PC-3 (cell line): ENCODE measurements at regions of chr6 and their contacts with region 1.

Region 1: DNA sequence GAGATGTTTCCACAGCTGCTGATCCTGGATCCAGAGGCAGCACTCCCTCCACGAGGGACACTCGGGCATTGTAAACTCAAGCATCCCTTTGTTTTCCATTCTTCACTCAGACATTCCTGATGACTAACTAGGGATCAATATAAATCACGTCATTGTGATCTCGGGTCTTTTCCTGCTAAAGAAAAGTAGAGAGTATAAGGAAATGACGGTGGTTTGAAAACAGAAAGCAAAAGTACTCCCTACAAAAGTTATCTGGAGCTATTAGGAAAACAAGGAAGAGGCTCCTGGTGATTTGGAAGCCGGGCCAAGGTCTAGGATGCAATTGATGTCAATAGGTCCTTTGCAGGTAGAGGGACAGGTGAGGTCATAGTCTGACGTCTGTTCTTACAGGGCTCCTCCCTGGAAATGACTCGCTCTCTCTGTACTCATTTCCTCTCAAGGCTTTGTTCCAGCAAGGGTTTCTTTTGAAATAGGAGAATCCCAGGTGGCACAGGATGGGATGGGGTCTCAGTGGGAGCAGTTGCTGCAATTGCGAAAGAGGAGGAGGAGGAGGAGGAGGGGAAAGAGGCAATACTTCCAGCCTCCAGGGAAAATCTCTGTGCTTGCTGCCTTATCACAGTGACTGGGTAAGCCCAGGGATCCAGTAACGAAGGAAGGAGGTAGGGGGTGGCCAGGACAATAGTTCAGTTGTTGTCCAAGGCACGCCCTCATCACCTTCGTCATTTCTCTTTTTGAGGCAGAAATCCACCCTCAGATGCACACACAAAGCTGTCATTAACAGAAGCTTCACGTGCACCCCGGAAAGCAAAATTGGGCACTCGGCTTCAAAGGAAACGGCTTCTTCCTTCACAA is 222.9 kb downstream of the LY86 start:
- DNase-seq: peak; percentile 98
- ATAC-seq: peak; percentile 82
- H3K4me3 ChIP-seq: peak overlapping the region; percentile 45; the same call in 1 of the 2 replicates
- H3K27ac ChIP-seq: peak overlapping the region; percentile 100
- H3K4me1 ChIP-seq: peaks cover 38% of the 10 kb centered on the region
- H3K27me3 ChIP-seq: no peaks in the 10 kb centered on the region
- CTCF ChIP-seq: no peak

Region 2: DNA sequence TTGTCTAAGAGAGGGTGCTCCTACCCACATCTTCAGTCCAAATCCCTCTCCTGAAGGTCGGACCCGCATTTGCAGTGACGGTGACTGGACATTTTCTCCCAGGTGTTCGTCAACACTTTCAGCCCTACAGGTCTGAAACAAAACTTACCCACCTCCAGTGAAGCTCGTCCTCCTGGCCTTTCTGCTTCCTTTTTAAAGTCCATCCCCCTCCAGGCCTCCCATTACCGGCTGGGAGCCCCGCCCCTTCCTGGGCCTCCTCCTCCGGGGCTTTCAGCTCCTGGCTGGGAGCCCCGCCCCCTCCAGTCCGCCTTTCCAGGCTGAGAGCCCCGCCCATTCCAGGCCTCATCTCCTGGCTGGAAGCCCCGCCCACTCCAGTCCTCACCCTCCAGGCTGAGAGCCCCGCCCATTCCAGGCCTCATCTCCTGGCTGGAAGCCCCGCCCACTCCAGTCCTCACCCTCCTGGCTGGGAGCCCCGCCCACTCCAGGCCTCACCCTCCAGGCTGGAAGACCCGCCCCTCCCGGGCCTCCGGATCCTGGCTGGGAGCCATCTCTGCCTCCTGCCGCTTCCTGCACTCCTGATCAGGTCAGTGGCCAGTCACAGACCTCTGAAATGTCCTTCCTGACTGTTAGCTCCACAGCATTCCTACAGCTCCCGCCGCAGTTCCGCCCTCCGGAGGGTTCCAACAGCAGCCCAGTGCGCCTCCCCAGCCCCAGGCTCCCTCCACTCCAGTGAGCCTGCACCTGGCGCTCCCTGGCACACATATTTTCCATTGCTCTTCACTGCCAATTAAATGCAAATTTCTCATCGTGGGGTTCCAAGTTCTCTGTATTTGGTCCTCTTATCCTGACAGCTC is 124.4 kb before region 1 on chr6:
- CTCF ChIA-PET with region 1: no interaction called
- POLR2A ChIA-PET with region 1: no interaction called
- intact Hi-C with region 1: loop called (anchors 5 kb)
- DNase-seq: peak; percentile 99
- ATAC-seq: peak; percentile 79
- H3K4me3 ChIP-seq: peak overlapping the region; percentile 52
- H3K27ac ChIP-seq: peak overlapping the region; percentile 77
- H3K4me1 ChIP-seq: peaks cover 42% of the 10 kb centered on the region
- H3K27me3 ChIP-seq: no peaks in the 10 kb centered on the region
- CTCF ChIP-seq: no peak

Region 3: GRCh38 chr6:6788394-6789020 is 22.9 kb before region 1 on chr6:
- CTCF ChIA-PET with region 1: no interaction called
- POLR2A ChIA-PET with region 1: no interaction called
- intact Hi-C with region 1: no loop called
- DNase-seq: peak; percentile 40
- ATAC-seq: no peak
- H3K4me3 ChIP-seq: no peak overlapping the region
- H3K27ac ChIP-seq: peak overlapping the region; percentile 94
- H3K4me1 ChIP-seq: peaks cover 28% of the 10 kb centered on the region
- H3K27me3 ChIP-seq: no peaks in the 10 kb centered on the region
- CTCF ChIP-seq: peak; percentile 66

Region 4: GRCh38 chr6:6851059-6851948 is 39.9 kb after region 1 on chr6:
- CTCF ChIA-PET with region 1: no interaction called
- POLR2A ChIA-PET with region 1: interaction called, 3 read pairs
- intact Hi-C with region 1: loop called (anchors 1 kb)
- DNase-seq: peak; percentile 99
- ATAC-seq: peak; percentile 99
- H3K4me3 ChIP-seq: no peak overlapping the region
- H3K27ac ChIP-seq: peak overlapping the region; percentile 88
- H3K4me1 ChIP-seq: peaks cover 32% of the 10 kb centered on the region
- H3K27me3 ChIP-seq: no peaks in the 10 kb centered on the region
- CTCF ChIP-seq: no peak

Region 5: DNA sequence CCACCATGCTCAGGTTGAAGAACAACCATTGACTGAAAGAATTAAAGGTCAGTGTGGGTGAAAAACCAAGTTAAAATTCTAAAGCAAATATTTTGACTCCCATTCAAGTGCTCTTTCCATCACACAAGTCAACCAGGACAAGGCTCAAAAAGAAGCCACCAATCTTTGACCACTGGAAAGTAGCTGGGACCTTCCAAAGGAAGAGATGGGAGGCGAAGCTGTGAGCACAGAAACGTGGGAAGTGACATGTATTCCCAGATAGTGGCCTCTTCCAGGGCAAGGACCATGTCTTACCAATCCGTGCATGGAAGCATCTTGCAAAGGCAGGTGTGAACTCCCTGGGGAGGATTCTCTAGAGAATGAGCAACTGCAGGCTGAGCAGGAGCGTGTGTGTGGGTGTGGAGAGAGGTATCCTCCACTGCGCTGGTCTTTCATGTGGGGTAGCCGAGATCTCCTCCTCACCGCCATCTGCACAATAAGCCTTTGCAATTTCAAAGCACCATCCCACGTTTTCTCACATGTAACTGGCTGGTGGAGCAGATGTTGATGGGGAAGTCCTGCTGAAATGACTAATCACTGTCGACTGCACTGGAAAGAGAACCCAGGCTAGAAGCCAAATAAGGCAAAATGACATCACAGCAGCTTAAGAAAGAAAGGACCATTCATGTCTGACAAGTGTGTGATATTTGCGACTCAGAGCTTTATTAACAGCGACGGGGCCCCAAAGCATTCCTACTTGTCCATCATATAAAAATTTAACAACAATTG is 107.0 kb after region 1 on chr6:
- CTCF ChIA-PET with region 1: no interaction called
- POLR2A ChIA-PET with region 1: no interaction called
- intact Hi-C with region 1: loop called (anchors 5 kb)
- DNase-seq: peak; percentile 75
- ATAC-seq: peak; percentile 45
- H3K4me3 ChIP-seq: no peak overlapping the region
- H3K27ac ChIP-seq: peak overlapping the region; percentile 73
- H3K4me1 ChIP-seq: peaks cover 42% of the 10 kb centered on the region
- H3K27me3 ChIP-seq: no peaks in the 10 kb centered on the region
- CTCF ChIP-seq: no peak

Region 6: DNA sequence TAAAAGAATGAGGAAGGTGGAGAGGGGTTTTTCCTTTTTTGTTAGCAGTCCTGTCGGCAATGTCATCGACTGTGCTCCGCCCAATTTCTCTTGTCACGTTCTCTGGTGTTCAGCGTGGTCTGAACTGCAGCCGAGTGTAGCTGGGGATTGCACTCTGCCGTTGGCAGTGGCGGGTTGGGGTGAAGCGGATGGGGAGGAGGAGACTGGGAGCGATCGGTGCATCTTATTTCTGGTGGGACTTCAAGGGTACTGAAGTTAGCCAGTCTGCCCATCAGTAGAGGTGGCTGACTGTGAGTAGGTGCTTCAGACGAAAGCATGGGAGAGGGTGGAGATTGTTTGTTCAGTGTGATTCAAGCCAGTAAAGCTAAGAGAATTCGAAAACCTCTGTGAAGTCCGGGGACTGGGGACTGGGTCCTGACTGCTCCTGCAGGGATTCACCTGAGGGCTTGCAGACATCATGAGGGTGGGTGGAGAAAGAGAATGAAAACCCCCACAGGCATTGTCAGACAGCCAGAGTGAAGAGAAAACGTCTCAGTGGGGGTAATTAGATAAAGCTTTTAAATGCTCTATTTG is 301.4 kb after region 1 on chr6:
- CTCF ChIA-PET with region 1: no interaction called
- POLR2A ChIA-PET with region 1: no interaction called
- intact Hi-C with region 1: loop called (anchors 5 kb)
- DNase-seq: peak; percentile 88
- ATAC-seq: peak; percentile 80
- H3K4me3 ChIP-seq: peak overlapping the region; percentile 97
- H3K27ac ChIP-seq: peak overlapping the region; percentile 90
- H3K4me1 ChIP-seq: peaks cover 38% of the 10 kb centered on the region
- H3K27me3 ChIP-seq: no peaks in the 10 kb centered on the region
- CTCF ChIP-seq: no peak